Naive thymus-derived CD8-positive, alpha-beta T cell (primary cell): ENCODE measurements at regions of chr4 and their contacts with region 1.

Region 1: DNA sequence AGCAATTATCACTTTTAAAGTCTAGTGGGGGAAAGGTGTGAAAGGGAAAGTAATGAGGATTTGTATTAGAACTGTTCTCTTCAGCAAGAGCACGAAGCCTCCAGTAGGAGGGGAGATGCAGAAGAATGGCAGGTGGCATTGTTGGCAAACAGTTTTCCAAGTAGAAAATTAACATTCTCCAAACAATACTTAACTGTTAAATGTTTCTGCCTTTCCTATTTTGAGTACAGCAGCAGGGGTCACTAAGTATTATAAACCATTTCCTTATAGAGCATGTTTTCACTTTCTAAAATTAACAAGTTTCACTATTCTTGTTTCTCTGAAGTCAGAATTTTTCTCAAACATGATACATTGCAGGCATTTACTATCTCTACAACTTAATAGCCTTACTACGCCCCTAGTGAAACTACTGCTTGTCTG is 58.7 kb downstream of the LEF1 start:
- DNase-seq: no peak
- ATAC-seq: no peak
- H3K4me3 Mint-ChIP-seq: peak overlapping the region; percentile 37 to 87 (median 75)
- H3K27ac Mint-ChIP-seq: peak overlapping the region; percentile 68 to 98 (median 94)
- H3K4me1 Mint-ChIP-seq: peaks cover 63 to 97% (median 94%) of the 10 kb centered on the region in 4 donors
- H3K27me3 Mint-ChIP-seq: no peaks in the 10 kb centered on the region

Region 2: GRCh38 chr4:108053251-108053711 is 56.7 kb before region 1 on chr4:
- POLR2A ChIA-PET with region 1: interaction called, 17 read pairs
- DNase-seq: no peak
- ATAC-seq: no peak
- H3K4me3 Mint-ChIP-seq: peak overlapping the region; percentile 5 to 89 (median 58)
- H3K27ac Mint-ChIP-seq: peak overlapping the region; percentile 93 to 99 (median 98)
- H3K4me1 Mint-ChIP-seq: peaks cover 57 to 97% (median 92%) of the 10 kb centered on the region in 4 donors
- H3K27me3 Mint-ChIP-seq: no peaks in the 10 kb centered on the region

Region 3: DNA sequence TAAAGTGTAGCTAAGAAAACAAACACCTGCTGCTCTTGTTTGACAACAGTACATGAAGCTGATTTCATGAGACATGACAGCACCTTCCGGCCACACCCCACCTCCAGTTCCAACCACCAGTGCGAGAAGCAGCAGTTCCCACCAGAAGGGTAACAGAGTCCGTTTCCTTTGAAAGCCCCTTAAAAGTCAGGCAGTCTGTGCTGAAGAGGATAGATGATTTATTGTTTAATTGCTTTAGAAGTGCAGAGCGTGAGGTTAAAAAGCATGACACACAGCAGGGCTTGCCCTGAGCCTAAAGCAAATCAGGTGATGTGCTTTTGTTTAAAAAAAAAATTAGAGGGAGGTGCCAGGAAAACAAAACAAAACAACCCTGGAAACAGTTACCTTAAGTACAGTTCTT is 37.7 kb before region 1 on chr4:
- POLR2A ChIA-PET with region 1: interaction called, 20 read pairs
- DNase-seq: peak; percentile 63 to 93 (median 86)
- ATAC-seq: peak; percentile 84 to 90
- H3K4me3 Mint-ChIP-seq: peak overlapping the region; percentile 51 to 83 (median 72)
- H3K27ac Mint-ChIP-seq: peak overlapping the region; percentile 87 to 99 (median 97)
- H3K4me1 Mint-ChIP-seq: peaks cover 37 to 86% (median 78%) of the 10 kb centered on the region in 4 donors
- H3K27me3 Mint-ChIP-seq: no peaks in the 10 kb centered on the region

Region 4: GRCh38 chr4:108080747-108081146 is 29.3 kb before region 1 on chr4:
- POLR2A ChIA-PET with region 1: interaction called, 18 read pairs
- DNase-seq: peak; percentile 48 to 87 (median 71)
- ATAC-seq: peak; percentile 79 to 91
- H3K4me3 Mint-ChIP-seq: peak overlapping the region; percentile 66 to 84 (median 81)
- H3K27ac Mint-ChIP-seq: peak overlapping the region; percentile 94 to 99 (median 98)
- H3K4me1 Mint-ChIP-seq: peaks cover 41 to 82% (median 72%) of the 10 kb centered on the region in 4 donors
- H3K27me3 Mint-ChIP-seq: no peaks in the 10 kb centered on the region

Region 5: GRCh38 chr4:108135549-108136209 is 25.7 kb after region 1 on chr4:
- POLR2A ChIA-PET with region 1: interaction called, 45 read pairs
- DNase-seq: no peak
- ATAC-seq: peak; percentile 14 to 15
- H3K4me3 Mint-ChIP-seq: peak overlapping the region; percentile 64 to 90 (median 82)
- H3K27ac Mint-ChIP-seq: peak overlapping the region; percentile 89 to 97 (median 93)
- H3K4me1 Mint-ChIP-seq: peaks cover 53 to 93% (median 90%) of the 10 kb centered on the region in 4 donors
- H3K27me3 Mint-ChIP-seq: no peaks in the 10 kb centered on the region

Region 6: DNA sequence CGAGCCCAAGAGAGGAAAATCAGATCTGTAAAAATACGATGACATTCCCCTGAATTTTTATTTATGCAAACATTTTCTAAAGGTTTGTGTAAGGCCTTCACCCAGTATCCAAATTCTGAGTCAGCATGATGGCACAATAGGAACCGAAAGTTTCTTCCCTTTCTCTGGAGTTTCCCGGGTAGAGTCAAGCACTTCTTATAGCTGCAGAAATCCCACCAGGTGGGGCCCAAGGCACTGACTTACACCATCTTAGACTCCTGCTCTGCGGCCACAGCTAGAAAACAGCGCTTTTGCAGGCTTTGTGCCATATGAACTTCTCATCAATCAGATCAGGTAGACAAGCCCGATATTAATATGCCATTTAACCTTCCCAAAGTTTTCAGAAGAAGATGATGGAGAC is 45.4 kb after region 1 on chr4:
- POLR2A ChIA-PET with region 1: interaction called, 20 read pairs
- DNase-seq: peak in 6 of 10 donors; percentile 33 to 69 (median 52)
- ATAC-seq: peak; percentile 55 to 69
- H3K4me3 Mint-ChIP-seq: peak overlapping the region; percentile 84 to 100 (median 92)
- H3K27ac Mint-ChIP-seq: peak overlapping the region; percentile 87 to 96 (median 92)
- H3K4me1 Mint-ChIP-seq: peaks cover 41 to 83% (median 72%) of the 10 kb centered on the region in 4 donors
- H3K27me3 Mint-ChIP-seq: no peaks in the 10 kb centered on the region

Region 7: GRCh38 chr4:108160741-108161352 is 50.8 kb after region 1 on chr4:
- POLR2A ChIA-PET with region 1: interaction called, 206 read pairs
- DNase-seq: peak in 4 of 10 donors; percentile 38 to 64 (median 56)
- ATAC-seq: peak; percentile 48 to 64
- H3K4me3 Mint-ChIP-seq: peak overlapping the region; percentile 84 to 100 (median 94)
- H3K27ac Mint-ChIP-seq: peak overlapping the region; percentile 73 to 96 (median 90)
- H3K4me1 Mint-ChIP-seq: peaks cover 20 to 58% (median 44%) of the 10 kb centered on the region in 4 donors
- H3K27me3 Mint-ChIP-seq: no peaks in the 10 kb centered on the region

Region 8: DNA sequence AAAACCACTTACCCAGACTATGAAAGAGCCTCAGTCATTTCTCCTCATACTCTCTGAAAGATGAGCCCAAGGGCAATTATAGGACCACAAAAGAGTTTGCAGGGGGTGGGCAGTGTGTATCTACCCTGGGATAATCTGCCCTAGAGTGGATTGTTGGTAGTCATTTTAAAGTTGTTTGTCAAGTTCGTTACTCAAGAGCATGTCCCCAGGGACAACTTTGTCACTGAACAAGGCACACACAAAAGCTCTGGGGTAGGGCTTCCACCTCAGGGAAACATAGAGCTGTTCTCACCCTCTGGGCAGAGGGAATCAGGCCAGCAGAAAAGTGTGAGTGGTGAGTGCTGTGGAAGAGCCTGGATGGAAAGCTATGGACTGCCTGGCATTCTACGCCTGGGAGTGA is 82.0 kb after region 1 on chr4:
- POLR2A ChIA-PET with region 1: no interaction called
- DNase-seq: no peak
- ATAC-seq: no peak
- H3K4me3 Mint-ChIP-seq: no peak overlapping the region
- H3K27ac Mint-ChIP-seq: peak overlapping the region in 4 of 10 donors; percentile 47 to 71 (median 58)
- H3K4me1 Mint-ChIP-seq: peaks cover 15 to 36% (median 24%) of the 10 kb centered on the region in 4 donors
- H3K27me3 Mint-ChIP-seq: no peaks in the 10 kb centered on the region